Activated CD4-positive, alpha-beta T cell treated with anti-CD3 and anti-CD28 coated beads for 36 hours (primary cell): ENCODE measurements at regions of chr15 and their contacts with region 1.

Region 1: DNA sequence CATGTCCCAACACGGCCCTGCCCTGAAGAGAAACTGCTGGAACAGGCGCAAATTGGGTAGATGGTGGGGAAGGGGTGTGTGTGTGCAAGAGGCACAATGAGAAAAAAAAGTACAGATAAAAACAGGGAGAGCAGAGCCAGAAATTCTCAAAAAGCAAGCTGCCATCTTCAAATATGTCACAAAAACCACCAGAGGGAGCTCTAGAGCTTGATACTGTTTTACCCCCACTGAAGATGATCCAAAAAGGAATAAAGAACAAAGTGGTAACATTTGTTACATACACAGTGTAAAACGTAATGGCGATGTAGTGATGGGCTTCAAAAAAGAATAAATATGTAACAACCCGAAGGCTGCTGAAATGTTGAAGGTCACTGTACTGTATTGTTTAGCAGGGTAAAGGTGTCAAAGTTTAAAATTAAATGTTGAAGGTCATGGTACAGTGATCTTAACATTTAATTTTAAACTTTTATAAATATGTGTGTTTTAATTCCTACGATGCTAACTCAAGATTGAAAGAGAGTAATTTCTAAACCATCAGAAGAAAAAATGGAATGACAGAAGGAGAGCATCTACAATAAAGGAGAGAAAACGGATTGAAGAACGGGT is 6.0 kb downstream of the SNRPA1 start:
- DNase-seq: no peak
- ATAC-seq: no peak
- H3K4me3 Mint-ChIP-seq: no peak overlapping the region
- H3K27ac Mint-ChIP-seq: peak overlapping the region; percentile 43
- H3K4me1 Mint-ChIP-seq: peaks cover 51% of the 10 kb centered on the region
- H3K27me3 Mint-ChIP-seq: no peaks in the 10 kb centered on the region

Region 2: DNA sequence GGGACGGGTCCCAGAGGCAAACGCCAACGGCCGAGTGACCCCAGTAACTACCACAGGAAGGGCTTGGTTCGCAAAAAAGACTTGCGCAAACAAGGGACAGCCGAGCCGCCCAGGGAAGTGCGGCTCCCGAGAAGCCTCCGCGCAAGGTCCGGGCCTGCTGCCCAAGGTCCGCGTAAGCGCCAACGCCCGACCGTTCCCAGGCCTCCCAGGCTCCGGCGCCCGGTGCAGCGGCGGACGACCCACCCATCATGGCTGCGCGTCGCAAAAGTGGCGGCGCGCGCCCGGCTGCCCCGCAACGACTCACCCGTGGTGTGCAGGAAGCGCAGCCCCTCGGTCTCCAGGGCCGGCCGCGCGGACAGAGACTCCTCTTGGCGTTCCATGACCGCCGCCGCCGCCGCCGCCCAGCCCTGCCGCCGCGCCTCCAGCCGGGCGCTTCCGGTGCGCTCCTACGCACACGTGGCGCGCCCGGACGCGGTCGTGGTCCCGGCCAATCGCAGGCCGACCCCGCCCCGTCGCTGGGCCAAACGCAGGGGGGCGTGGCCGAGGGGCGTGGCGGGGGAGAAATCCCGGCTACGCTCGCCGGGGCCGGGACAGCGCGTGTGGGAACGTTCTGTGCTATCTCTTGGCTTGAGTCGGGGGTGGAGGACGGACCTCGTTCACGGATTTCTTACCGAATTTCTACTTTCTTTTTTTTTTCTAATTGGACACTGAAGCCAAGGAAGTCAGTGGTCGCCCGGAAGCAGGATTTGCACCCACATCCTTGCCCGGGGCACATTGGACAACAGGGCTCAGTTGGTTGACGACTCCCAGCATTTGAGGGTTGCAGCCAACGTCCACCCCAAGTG is 11.8 kb before region 1 on chr15 and contains the start of gene SELENOS:
- CTCF ChIA-PET with region 1: interaction called, 31 read pairs
- POLR2A ChIA-PET with region 1: interaction called, 5 read pairs
- intact Hi-C with region 1: loop called (anchors 1 kb)
- DNase-seq: peak; percentile 93
- ATAC-seq: peak; percentile 92
- H3K4me3 Mint-ChIP-seq: peak within 1 kb of the TSS; percentile 89
- H3K27ac Mint-ChIP-seq: peak within 1 kb of the TSS; percentile 79
- H3K4me1 Mint-ChIP-seq: peaks cover 24% of the 10 kb centered on the region
- H3K27me3 Mint-ChIP-seq: no peaks in the 10 kb centered on the region
- total RNA-seq, gene SELENOS: 14.5 to 20.8 TPM